ENCODE measurements at regions of chr5 and their contacts with region 1.

Region 1: DNA sequence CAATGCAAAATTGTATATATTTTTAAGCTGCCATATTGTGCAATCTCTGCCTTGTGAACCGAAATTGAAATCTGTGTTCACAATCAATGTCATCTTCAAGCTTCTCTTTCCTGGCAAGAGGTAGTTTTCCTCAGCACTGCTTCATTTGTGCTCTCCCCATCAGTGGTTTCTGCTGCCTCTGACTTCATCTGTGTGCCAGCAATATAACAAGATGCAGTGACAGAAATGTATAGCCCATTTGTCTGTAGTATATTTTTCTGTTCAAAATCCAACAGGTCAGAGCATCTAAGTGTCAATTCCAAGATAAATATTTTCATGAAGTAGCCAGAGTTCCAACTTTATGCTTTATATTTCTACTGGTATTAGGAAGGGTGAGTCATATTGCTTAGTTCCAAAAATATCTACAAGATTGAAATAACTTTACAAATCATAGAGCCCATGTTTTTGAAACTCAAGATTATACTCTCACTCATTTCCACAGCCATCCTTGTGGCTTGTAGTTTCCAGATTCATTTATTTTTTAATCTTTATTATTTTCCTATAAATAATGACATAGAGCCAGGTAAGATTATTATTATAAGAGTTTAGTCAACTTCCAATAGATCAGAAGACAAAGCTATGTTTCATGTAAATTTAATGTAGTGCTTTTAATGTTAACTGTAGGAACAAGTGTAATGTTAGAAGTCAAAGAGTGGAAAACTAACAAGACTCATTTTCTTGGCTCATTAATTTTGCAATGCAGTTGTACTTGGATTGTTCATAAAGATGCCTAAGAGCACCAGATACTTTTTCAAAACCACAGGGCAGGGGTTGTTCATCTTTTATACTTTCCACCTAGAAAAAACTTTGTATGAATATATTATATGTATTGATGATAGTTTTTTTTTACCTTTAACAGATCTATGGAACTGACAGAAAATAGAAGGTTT is 1705.1 kb upstream of the CDH9 start:
- DNase-seq: no peak
- ATAC-seq: no peak
- H3K4me3 ChIP-seq: no peak overlapping the region
- H3K27ac ChIP-seq: no peak overlapping the region
- H3K4me1 ChIP-seq: no peaks in the 10 kb centered on the region
- H3K27me3 ChIP-seq: no peaks in the 10 kb centered on the region
- CTCF ChIP-seq: no peak

Region 2: DNA sequence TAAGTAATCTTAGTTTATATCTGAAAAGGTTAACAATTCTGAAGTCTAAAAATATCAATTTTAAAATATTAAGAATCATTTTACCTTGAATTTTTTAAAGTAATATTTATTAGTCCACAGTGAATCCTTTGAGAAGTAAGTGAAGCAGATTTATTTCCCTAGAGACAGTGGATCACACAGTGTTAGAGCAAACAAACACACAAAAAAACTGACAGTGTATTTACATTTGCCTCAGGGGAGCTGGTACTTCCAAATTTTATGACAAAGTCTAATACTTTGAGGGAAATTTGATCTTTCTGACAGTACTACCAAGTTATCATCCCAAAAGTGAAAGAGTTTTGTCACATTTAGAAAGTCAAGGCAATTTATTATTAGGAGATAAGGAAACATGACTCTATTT is 45.5 kb after region 1 on chr5:
- intact Hi-C with region 1: no loop called
- DNase-seq: no peak
- ATAC-seq: no peak
- H3K4me3 ChIP-seq: no peak overlapping the region
- H3K27ac ChIP-seq: no peak overlapping the region
- H3K4me1 ChIP-seq: no peaks in the 10 kb centered on the region
- H3K27me3 ChIP-seq: no peaks in the 10 kb centered on the region
- CTCF ChIP-seq: no peak

Region 3: GRCh38 chr5:30436691-30437090 is 1693.2 kb after region 1 on chr5:
- intact Hi-C with region 1: loop called in 1 of 10 experiments (anchors 5 kb)
- DNase-seq: no peak
- ATAC-seq: no peak
- H3K4me3 ChIP-seq: no peak overlapping the region
- H3K27ac ChIP-seq: no peak overlapping the region
- H3K4me1 ChIP-seq: no peaks in the 10 kb centered on the region
- H3K27me3 ChIP-seq: no peaks in the 10 kb centered on the region
- CTCF ChIP-seq: no peak

Measured in heart right ventricle (tissue), 16 donors.